ENCODE measurements at regions of chr22 and their contacts with region 1.

Region 1: DNA sequence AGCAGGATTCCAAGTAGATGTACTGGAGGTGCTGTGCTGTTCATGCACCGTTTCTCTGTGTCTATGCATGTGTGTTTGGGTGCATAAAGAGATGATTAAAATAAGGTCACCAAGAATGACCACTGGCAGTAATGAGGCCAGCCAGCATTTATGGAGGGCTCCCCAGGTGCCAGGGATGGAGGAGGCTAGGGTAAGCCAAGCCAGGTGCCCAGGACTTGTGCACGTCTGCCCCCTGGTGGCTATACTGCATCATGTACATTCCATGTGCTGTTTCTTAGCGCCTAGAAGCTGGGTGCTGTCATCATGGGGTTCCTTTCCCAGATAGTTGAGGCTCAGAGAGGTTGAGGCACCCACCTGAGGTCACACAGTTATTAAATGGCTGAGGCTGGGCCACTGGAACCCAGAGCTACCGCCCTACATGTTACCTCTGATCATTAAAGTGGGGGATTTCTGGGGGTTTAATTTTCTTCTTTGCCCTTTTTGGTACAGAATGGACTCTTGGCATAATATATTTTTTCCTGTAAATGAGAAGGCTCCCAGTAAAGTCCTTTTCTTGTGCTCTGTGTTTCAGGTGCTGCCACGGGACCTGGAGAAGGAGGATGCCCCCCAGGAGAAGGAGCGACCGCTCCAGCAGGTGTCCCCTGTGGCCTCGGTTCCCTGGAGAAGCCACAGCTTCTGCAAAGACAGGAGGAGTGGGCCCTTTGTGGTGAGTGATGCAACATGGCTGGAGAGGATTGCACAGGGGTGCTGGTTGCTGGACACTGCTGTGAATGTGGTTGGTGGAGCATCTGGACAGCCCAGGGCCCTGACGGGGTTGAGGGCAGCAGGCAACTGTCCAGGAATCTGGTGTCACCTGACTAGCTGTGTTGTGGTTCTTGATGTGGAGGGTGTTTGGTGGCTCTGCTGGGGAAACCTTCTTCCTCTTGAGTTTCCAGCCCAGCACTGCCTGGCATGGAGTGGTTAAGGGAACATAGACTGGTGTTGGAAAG is 96.4 kb downstream of the KIAA1671 start:
- DNase-seq: peak; percentile 58 to 73
- ATAC-seq: peak; percentile 43

Region 2: GRCh38 chr22:24938741-24939341 is 110.1 kb before region 1 on chr22:
- intact Hi-C with region 1: loop called in 1 of 2 experiments (anchors 5 kb)
- DNase-seq: no peak
- ATAC-seq: peak; percentile 68

Region 3: DNA sequence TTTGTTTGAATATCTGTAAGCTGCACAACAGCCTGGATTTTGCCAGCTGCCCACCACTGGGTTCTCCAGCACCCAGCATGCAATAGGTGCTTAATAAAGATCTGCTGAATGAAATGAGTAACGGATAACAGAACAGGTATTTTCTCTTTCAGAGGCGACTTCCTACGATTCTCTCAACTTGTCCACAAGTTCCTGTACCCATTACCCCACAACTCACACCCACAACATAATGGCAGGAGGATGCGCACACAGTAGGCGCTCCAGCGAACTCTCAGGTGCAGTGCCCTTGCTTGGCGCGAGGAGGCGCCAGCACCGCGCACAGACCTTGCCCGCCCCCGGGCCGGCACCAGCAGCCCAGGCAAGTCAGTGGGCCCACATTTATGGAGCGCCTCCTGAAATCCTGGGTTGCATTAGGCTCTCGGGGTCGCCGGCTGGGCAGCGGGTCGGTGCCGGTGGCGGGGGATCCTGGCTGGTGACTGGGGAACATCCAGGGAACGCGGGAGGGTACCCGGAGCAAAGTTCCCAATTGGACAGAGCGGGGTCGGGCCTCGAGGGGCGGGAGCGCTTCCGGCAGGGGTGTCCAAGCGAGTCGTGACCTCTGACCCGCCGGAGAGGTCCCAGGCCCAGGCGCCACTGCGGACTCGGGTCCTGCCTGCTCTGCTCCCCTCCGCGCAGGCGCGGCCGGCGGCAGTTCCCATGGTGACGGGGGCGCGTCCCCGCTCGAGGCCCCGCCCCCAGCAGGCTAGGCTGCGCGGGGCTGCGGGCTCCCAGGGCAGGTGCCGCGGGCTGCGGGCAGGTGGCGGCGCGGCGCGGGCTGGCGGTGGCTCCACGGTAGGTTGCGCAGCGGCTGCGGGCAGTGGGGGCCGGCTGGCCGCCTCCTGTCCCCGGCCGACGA is 96.8 kb before region 1 on chr22 and contains the start of gene KIAA1671:
- intact Hi-C with region 1: loop called (anchors 2 to 10 kb)
- DNase-seq: peak; percentile 81 to 88
- ATAC-seq: peak; percentile 85
- total RNA-seq, gene KIAA1671: 100 to 106 TPM

Region 4: DNA sequence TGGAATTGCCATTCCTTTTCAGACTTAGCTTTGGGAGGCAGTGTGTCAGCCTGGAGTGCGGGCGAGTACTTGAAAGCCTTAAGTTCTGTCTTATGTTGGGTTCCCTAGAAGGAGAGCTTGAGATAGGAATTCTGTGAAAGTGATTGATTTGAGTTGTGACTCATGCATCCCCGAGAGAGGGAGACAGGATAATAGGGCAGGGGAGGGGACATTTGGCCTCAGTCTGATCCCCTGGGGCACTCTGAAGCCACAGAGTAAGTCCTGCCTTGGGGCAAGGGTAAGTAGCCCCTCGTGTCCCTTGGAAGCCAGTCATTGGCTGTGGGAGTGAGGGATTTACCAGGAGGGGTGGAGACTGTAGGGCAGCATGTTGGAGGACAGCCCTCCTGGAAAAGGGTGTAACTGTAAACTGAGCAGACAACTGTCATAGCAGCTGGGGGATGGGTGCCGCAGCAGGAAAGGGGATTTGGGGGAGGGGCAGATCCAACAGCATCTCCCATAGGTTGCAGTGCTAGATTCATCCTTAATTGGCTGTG is 52.5 kb before region 1 on chr22:
- intact Hi-C with region 1: loop called in 1 of 2 experiments (anchors 10 kb)
- DNase-seq: peak; percentile 59 to 69
- ATAC-seq: peak; percentile 50